Cardiac septum (tissue), 1 donor: ENCODE measurements at regions of chr17 and their contacts with region 1.

Region 1: GRCh38 chr17:32869345-32870026 is 7.4 kb downstream of the MYO1D start:
- DNase-seq: no peak

Region 2: GRCh38 chr17:32551186-32551955 is 318.1 kb before region 1 on chr17:
- intact Hi-C with region 1: no loop called
- DNase-seq: no peak

Region 3: DNA sequence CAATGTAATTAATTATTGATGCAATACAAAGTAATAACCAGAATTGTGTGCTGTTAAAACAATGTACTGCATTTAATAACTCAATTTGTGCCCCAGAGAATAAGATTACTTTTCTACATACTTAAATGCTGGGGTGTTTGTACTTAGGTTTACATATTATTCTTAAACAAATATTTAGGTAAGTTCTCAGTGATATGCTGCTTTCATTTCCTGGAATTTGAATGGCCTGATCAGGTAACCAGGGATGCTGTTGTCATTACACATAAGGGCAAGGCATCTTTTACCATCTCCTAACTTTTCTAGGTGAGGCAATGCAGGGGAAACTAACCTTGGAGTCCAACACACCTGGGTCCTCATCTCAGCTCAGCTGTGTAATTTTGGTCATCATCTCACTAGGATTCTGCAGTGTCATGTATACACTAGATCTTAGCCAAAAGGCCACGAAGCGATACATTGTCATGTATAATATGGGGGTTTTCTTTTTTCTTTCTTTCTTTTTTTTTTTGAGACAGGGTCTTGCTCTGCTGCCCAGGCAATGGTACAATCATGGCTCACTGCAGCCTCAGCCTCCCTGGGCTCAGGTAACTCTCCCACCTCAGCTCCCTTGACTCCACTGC is 37.8 kb before region 1 on chr17:
- intact Hi-C with region 1: loop called (anchors 5 kb)
- DNase-seq: no peak

Region 4: DNA sequence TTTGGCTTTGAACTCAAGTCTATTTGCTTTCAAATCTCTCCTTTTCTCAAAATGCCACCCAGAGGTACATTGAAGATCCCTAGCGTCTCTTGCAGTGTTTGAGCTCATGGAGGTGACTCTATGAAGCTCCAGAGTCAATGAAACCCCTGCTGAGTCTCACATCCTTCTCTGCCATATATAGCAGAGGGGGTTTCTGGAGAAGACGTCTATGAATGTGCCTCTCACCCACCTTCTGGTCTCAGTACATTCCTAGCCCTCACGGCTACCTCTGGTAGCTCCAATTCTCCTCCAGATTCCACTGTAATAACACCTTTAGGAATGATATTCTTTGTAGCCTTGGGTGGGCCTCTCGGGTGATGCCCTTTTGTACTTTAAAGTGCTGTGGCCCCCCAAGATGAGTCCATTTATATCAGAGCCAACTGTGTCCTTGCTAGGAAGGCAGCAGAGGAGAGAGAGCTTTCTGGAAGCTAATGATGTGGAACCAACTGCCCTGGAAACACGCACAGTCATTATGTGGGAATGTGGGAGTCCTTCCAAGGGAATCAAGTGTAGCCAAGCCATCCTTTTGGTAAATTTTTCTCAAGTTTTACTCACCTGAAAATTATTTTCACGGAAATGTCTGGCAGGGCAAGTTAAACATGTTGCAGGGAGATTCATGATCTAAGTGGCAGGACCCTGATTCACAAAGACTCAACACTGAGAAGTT is 300.2 kb after region 1 on chr17:
- intact Hi-C with region 1: no loop called
- DNase-seq: no peak